ENCODE measurements at regions of chr10 and their contacts with region 1.

Region 1: DNA sequence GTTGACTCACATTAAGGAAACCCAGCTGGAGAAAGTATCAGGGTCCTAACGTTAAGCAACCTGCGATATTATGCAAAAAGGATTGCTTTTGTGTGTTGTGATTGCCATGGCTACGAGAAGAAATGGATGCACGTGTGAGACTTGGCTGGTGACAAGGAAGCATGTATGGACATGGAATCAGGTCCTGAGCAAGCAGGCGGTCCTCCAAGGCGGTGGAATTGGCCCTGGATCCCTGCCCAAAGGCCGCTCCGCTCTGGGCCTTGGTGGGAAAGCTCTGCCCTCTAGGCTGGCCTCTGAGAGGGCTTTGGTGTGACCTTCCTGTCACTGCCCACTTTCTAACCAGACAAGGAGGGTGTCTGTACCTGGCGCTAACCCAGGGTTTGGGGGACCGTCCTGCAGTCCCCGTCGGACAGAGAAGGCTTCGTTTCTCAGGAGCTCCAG is 192.1 kb downstream of the EBF3 start:
- DNase-seq: no peak
- ATAC-seq: no peak
- H3K4me3 ChIP-seq: no peak overlapping the region
- H3K27ac ChIP-seq: no peak overlapping the region
- H3K4me1 ChIP-seq: no peaks in the 10 kb centered on the region
- H3K27me3 ChIP-seq: no peaks in the 10 kb centered on the region
- CTCF ChIP-seq: no peak

Region 2: GRCh38 chr10:129807211-129807610 is 35.2 kb after region 1 on chr10:
- intact Hi-C with region 1: loop called in 1 of 10 experiments (anchors 1 kb)
- DNase-seq: no peak
- ATAC-seq: no peak
- H3K4me3 ChIP-seq: no peak overlapping the region
- H3K27ac ChIP-seq: no peak overlapping the region
- H3K4me1 ChIP-seq: no peaks in the 10 kb centered on the region
- H3K27me3 ChIP-seq: peaks cover 0 to 13% (median 0%) of the 10 kb centered on the region in 7 donors
- CTCF ChIP-seq: no peak

Region 3: DNA sequence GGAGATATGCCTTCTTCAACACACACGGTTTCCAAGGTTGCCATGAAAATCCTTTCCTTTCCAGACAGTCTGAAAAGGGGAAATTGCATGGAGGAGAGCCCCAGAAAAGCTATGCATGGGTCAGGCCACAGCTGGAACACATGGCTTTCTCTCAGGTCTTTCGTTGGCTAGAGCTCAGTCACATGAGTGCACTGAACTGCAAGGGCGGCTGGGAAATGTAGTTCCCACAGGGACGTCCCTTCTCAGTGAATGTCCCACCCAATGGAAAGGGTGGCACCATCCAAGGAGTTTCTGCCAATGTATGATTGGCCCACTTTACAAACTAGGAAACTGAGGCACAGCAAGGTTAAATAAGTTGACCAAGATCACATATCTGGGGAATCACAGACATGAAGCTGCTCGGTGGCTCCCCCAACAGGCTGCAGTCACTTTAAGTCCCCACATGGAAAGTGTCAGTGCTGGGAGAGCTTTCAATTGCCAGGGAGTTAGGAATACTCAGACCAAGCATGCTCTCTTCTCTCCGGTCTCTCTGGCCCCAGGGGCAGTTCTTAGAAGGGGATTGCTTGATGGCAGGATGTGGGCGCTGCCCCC is 935.5 kb after region 1 on chr10:
- intact Hi-C with region 1: no loop called
- DNase-seq: no peak
- ATAC-seq: no peak
- H3K4me3 ChIP-seq: no peak overlapping the region
- H3K27ac ChIP-seq: no peak overlapping the region
- H3K4me1 ChIP-seq: no peaks in the 10 kb centered on the region
- H3K27me3 ChIP-seq: peaks cover 0 to 45% (median 19%) of the 10 kb centered on the region in 7 donors
- CTCF ChIP-seq: no peak